Esophagus squamous epithelium (tissue), 5 donors: ENCODE measurements at regions of chr13 and their contacts with region 1.

Region 1: GRCh38 chr13:84896128-84896527 is 903.1 kb downstream of the SLITRK6 start:
- DNase-seq: no peak
- H3K4me3 ChIP-seq: no peak overlapping the region
- H3K27ac ChIP-seq: no peak overlapping the region
- H3K4me1 ChIP-seq: no peaks in the 10 kb centered on the region
- H3K27me3 ChIP-seq: no peaks in the 10 kb centered on the region
- CTCF ChIP-seq: peak in 5 of 6 experiments; percentile 43 to 70 (median 58)
- POLR2A ChIP-seq: no peak

Region 2: DNA sequence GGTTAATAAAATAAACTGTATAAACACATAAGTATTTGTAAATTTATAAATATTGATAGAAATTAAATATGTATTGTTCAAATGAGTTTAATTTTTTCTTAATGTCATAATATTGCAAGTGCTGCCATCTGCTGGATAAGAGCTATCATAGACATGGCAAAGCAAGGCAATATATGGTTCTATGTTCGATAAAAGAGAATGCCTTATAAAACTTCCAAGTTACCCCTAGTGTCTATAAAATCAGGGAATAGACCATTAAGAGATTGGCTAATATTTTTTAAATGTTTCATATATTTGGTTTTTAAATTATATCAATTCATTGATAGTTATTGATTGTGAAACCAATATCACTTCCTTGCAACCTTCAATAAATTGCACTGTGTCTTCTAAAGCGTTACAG is 932.0 kb after region 1 on chr13:
- intact Hi-C with region 1: loop called (anchors 10 kb)
- DNase-seq: no peak
- H3K4me3 ChIP-seq: no peak overlapping the region
- H3K27ac ChIP-seq: no peak overlapping the region
- H3K4me1 ChIP-seq: no peaks in the 10 kb centered on the region
- H3K27me3 ChIP-seq: no peaks in the 10 kb centered on the region
- CTCF ChIP-seq: peak in 4 of 6 experiments; percentile 10 to 55 (median 53)
- POLR2A ChIP-seq: no peak